GM10248 (cell line): ENCODE measurements at regions of chr1 and their contacts with region 1.

Region 1: GRCh38 chr1:159891275-159892157 is 8.4 kb downstream of the CFAP45 start:
- DNase-seq: peak; percentile 71
- CTCF ChIP-seq: peak; percentile 98

Region 2: DNA sequence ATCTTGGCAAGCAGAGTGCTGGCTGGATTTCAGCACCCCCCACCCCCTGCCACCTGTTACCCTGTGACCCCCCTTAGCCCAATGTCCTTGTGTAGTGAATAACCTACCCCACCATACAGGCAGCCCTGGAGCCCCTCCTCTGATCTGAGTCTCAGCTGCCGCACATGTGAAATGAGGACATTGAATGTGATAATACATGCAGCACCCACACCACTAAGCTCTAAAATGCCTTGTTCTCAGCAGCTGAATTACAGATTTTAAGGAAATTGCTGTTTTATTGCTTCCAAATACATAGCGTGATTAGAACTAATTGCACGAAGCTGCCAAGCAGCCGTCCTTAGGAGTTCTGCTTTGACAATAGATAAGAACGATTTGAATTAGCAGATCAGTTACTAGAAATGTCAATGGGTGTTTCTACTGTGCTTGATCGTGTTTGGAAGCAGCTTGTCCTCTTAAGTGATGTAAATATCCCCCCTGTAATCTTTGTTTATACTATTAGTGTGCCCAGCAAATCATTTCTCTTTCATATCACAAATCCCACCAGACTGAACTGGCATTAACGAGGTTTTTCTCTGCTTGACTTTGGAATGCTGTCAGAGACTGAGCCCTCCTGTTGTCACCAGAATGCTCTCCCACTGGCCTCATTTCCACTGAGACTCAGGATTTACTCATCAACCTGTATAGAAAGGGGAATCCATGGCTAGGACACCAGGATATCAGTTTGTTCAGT is 59.9 kb before region 1 on chr1:
- CTCF ChIA-PET with region 1: interaction called, 10 read pairs
- POLR2A ChIA-PET with region 1: no interaction called
- DNase-seq: no peak
- CTCF ChIP-seq: no peak

Region 3: GRCh38 chr1:159866905-159867682 is 24.4 kb before region 1 on chr1:
- CTCF ChIA-PET with region 1: interaction called, 40 read pairs
- POLR2A ChIA-PET with region 1: no interaction called
- DNase-seq: no peak
- CTCF ChIP-seq: no peak

Region 4: GRCh38 chr1:159872881-159873280 is 18.6 kb before region 1 on chr1:
- CTCF ChIA-PET with region 1: interaction called, 40 read pairs
- POLR2A ChIA-PET with region 1: no interaction called
- DNase-seq: no peak
- CTCF ChIP-seq: no peak